Colonic mucosa (tissue), 4 donors: ENCODE measurements at regions of chr6 and their contacts with region 1.

Region 1: DNA sequence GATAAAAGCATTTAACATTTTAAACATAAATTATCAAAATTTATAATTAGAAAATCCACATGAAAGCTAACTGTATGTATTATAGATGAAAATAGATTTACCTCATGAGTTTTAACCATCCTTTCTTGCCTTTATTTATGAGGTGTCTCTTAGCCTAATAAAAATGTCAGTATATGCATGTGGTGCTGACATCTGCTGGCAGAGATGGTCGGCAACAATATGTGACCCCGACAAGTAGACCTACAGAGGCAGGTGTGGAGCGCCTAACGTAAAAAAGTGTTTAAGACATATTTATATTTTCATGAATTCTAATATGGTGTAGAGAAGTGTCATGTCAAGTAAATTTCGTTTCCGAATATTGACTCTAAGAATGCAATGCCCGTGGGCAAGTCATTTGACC is 149.0 kb upstream of the FUT9 start:
- DNase-seq: no peak
- H3K4me3 ChIP-seq: no peak overlapping the region
- H3K27ac ChIP-seq: no peak overlapping the region
- H3K4me1 ChIP-seq: no peaks in the 10 kb centered on the region
- H3K27me3 ChIP-seq: no peaks in the 10 kb centered on the region
- CTCF ChIP-seq: peak; percentile 18

Region 2: GRCh38 chr6:95431637-95432228 is 435.0 kb before region 1 on chr6:
- intact Hi-C with region 1: loop called (anchors 5 kb)
- DNase-seq: peak; percentile 30
- H3K4me3 ChIP-seq: no peak overlapping the region
- H3K27ac ChIP-seq: no peak overlapping the region
- H3K4me1 ChIP-seq: no peaks in the 10 kb centered on the region
- H3K27me3 ChIP-seq: no peaks in the 10 kb centered on the region
- CTCF ChIP-seq: peak; percentile 45